Upper lobe of right lung (tissue), 1 donor: ENCODE measurements at regions of chr19 and their contacts with region 1.

Region 1: DNA sequence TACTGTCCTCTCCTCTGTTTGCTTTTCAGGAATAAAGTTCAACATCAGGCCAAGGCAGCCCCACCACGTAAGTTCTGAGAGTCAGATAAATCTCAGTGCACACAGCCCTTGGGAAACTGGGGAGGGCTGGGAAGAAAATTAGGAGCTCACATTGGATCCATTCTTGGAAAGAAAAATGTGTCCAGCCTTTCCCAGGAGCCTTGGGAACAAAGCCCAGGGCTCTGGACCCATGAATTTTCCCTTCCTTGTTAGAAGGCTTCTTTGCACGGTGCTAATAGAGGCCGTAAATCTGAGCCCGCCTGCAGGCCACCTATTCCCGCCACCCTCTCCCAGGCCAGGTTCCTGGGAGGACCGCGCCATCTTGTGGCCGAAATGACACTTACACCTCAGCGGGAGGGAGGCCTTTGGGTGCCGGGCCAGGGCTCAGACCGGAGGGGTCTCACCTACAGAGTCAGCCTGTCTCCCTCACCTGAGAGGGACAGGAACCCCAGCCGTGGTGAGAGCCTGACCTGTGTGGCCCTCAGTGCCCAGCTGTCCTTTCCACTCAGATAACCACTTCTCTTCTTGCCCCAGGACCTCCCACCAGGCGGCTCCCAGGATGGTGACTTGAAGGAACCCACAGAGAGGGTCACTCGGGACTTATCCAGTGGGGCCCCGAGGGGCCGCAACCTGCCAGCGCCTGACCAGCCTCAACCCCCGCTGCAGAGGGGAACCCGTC is 25.1 kb upstream of the KCTD15 start:
- DNase-seq: peak; percentile 84
- ATAC-seq: peak; percentile 81
- H3K4me3 ChIP-seq: no peak overlapping the region
- H3K27ac ChIP-seq: no peak overlapping the region
- H3K4me1 ChIP-seq: no peaks in the 10 kb centered on the region
- H3K27me3 ChIP-seq: peaks cover 15% of the 10 kb centered on the region
- CTCF ChIP-seq: peak; percentile 83

Region 2: GRCh38 chr19:33430674-33431277 is 340.8 kb before region 1 on chr19:
- intact Hi-C with region 1: loop called (anchors 5 kb)
- DNase-seq: peak; percentile 83
- ATAC-seq: peak; percentile 80
- H3K4me3 ChIP-seq: no peak overlapping the region
- H3K27ac ChIP-seq: no peak overlapping the region
- H3K4me1 ChIP-seq: no peaks in the 10 kb centered on the region
- H3K27me3 ChIP-seq: no peaks in the 10 kb centered on the region
- CTCF ChIP-seq: peak; percentile 75

Region 3: DNA sequence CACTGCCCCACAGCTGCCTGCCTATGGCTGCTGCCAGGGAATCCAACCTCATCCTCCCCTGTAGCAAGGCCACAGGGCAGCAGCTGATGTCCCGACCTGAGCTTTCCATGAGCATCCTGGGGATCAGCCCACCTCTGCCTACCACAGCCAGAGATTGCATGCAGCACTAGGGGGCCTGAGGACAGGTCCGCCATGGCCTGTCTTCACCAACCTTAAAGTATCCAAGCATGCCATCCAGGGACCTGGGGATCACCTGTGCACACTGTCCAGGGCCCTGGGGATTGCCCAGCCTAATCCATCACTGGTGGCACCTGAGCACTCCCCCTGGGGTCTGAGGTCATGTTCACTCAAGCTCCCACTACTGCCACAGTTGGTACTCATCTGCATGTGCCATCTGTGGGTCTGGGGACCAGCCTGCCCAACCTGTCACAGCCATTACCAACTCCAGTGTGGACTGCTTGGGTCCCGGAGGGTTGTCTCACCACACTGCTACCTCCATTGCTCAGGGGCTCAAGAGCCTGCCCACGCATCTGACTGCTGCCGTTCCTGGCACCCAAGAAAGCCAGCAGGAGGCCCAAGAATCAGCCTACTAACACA is 78.1 kb after region 1 on chr19:
- intact Hi-C with region 1: no loop called
- DNase-seq: no peak
- ATAC-seq: peak; percentile 19
- H3K4me3 ChIP-seq: no peak overlapping the region
- H3K27ac ChIP-seq: no peak overlapping the region
- H3K4me1 ChIP-seq: no peaks in the 10 kb centered on the region
- H3K27me3 ChIP-seq: no peaks in the 10 kb centered on the region
- CTCF ChIP-seq: no peak

Region 4: GRCh38 chr19:34188408-34188807 is 416.9 kb after region 1 on chr19:
- intact Hi-C with region 1: no loop called
- DNase-seq: no peak
- ATAC-seq: no peak
- H3K4me3 ChIP-seq: no peak overlapping the region
- H3K27ac ChIP-seq: no peak overlapping the region
- H3K4me1 ChIP-seq: peaks cover 63% of the 10 kb centered on the region
- H3K27me3 ChIP-seq: no peaks in the 10 kb centered on the region
- CTCF ChIP-seq: no peak